AG04450 (cell line): ENCODE measurements at regions of chr1 and their contacts with region 1.

Region 1: GRCh38 chr1:222739465-222739864 is 2.5 kb downstream of the FAM177B start:
- DNase-seq: no peak
- H3K4me3 ChIP-seq: no peak overlapping the region
- H3K27ac ChIP-seq: no peak overlapping the region
- H3K27me3 ChIP-seq: no peaks in the 10 kb centered on the region
- CTCF ChIP-seq: no peak

Region 2: GRCh38 chr1:222275729-222276465 is 463.6 kb before region 1 on chr1:
- CTCF ChIA-PET with region 1: no interaction called
- POLR2A ChIA-PET with region 1: no interaction called
- DNase-seq: no peak
- H3K4me3 ChIP-seq: no peak overlapping the region
- H3K27ac ChIP-seq: no peak overlapping the region
- H3K27me3 ChIP-seq: no peaks in the 10 kb centered on the region
- CTCF ChIP-seq: no peak

Region 3: GRCh38 chr1:222754366-222755139 is 15.1 kb after region 1 on chr1:
- CTCF ChIA-PET with region 1: interaction called, 11 read pairs
- POLR2A ChIA-PET with region 1: no interaction called
- DNase-seq: peak; percentile 92
- H3K4me3 ChIP-seq: no peak overlapping the region
- H3K27ac ChIP-seq: peak overlapping the region; percentile 49
- H3K27me3 ChIP-seq: no peaks in the 10 kb centered on the region
- CTCF ChIP-seq: no peak

Region 4: GRCh38 chr1:222914861-222915632 is 175.6 kb after region 1 on chr1:
- CTCF ChIA-PET with region 1: no interaction called
- POLR2A ChIA-PET with region 1: no interaction called
- DNase-seq: no peak
- H3K4me3 ChIP-seq: no peak overlapping the region
- H3K27ac ChIP-seq: no peak overlapping the region
- H3K27me3 ChIP-seq: no peaks in the 10 kb centered on the region
- CTCF ChIP-seq: no peak